ENCODE measurements at regions of chr16 and their contacts with region 1.

Region 1: DNA sequence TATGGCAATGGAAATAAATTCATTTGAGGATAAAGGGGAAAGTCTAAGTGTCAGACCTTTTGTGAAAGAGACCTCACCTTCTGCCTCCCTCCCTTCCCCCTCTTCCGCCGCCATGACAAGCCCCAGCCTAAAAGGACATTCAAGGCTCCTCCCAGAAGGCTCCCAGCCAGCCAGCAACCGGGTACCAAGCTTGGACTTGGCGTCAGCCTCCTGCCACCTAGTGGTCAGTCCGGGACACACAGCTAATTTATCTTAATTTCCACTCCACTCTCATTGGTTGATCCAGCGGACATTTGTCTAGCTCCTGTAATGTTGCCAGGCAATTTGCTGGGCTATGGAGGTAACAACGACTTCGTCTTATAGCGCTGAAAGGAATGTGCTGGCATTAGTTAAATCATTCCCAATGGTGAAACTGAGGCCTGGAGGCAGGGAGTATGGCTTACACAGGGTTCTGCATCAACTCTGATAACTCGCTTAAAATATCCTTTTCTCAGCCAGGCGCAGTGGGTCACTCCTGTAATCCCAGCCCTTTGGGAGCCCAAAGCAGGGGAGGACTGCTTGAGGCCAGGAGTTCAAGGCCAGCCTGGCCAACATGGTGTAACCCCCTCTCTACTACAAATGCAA is 19.3 kb upstream of the CLEC3A start:
- DNase-seq: peak; percentile 90 to 93 (median 91)
- ATAC-seq: peak; percentile 92 to 95
- H3K4me3 ChIP-seq: no peak overlapping the region
- H3K27ac ChIP-seq: no peak overlapping the region
- H3K4me1 ChIP-seq: no peaks in the 10 kb centered on the region
- H3K27me3 ChIP-seq: no peaks in the 10 kb centered on the region

Region 2: GRCh38 chr16:77675464-77676324 is 327.3 kb before region 1 on chr16:
- intact Hi-C with region 1: loop called in 1 of 4 experiments (anchors 10 kb)
- DNase-seq: peak; percentile 37 to 77 (median 56)
- ATAC-seq: peak; percentile 83 to 86
- H3K4me3 ChIP-seq: no peak overlapping the region
- H3K27ac ChIP-seq: no peak overlapping the region
- H3K4me1 ChIP-seq: no peaks in the 10 kb centered on the region
- H3K27me3 ChIP-seq: no peaks in the 10 kb centered on the region

Region 3: DNA sequence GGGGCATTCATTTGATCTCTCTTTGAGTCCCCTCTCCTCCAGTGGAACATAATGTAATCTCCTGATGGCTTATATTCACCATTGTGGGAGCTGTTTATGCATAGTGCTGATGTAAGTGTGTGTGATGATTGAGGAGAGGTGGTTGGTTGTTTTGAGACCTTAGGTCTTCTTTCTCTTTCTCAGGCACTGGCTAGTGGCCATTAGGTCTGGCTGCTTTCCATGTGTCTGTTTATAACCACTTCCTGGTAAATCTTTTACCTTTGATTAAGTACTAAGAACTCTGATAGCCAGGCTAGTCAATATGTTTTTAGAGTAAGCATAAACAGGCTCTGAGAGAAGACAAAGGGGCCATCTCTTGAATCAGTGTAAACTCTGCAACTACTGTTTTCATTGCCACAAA is 186.7 kb before region 1 on chr16:
- intact Hi-C with region 1: no loop called
- DNase-seq: no peak
- ATAC-seq: no peak
- H3K4me3 ChIP-seq: no peak overlapping the region
- H3K27ac ChIP-seq: no peak overlapping the region
- H3K4me1 ChIP-seq: no peaks in the 10 kb centered on the region
- H3K27me3 ChIP-seq: no peaks in the 10 kb centered on the region

Measured in right cardiac atrium (tissue), 5 donors.